Esophagus squamous epithelium (tissue), 5 donors: ENCODE measurements at regions of chr21 and their contacts with region 1.

Region 1: DNA sequence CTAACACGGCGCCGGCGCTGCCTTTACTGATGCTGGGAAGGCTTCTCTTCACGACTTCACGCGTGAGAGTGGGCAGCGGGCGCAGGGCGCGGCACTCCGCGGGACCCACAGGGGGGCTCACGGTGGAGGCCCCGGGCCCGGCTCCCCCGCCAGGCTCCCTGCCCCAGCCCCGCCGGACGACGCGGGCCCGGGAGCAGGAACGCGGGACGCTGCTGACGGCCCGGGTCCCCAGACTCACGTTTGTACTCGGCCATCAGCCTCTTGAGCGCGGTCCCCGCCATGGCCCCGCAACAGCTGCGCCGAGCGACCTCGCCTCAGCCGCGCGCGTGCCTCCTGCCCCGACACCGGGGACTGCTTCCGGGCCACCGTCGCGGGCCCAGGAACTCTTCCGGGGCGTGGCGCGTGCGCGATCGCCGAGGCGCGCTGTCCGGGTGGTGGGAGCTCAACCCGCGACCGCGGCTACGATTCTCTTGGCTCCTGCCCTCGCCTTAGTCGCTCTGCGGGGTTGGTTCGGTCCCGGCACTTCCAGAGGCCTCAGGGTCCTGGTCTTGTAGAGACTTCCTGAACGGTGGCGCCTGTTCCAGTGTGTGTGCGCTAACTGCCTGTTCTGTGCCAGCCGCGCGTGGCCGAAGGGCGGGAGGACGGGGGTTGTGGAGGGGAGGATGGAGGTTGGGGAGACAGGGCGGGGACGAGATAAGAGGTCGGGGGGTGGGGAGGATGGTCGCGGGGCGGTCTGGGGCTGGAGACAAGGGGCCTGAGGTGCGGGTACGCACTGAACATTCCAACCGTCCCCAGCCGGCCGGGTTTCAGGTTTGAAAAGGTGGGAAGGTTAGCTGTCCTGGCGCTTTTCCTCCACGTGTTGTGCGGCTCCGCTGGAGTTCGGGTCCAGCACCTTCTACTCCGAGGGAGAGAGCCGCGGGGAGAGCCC is at the start of gene UBE2G2:
- DNase-seq: no peak
- H3K4me3 ChIP-seq: peak within 1 kb of the TSS; percentile 68 to 93 (median 80)
- H3K27ac ChIP-seq: peak within 1 kb of the TSS; percentile 74 to 86 (median 80)
- H3K4me1 ChIP-seq: peaks cover 5 to 42% (median 29%) of the 10 kb centered on the region in 3 donors
- H3K27me3 ChIP-seq: no peaks in the 10 kb centered on the region
- CTCF ChIP-seq: peak in 1 of 6 experiments; percentile 45
- POLR2A ChIP-seq: peak in 3 of 4 donors; percentile 19 to 74 (median 62)
- total RNA-seq, gene UBE2G2: 27.9 to 70.0 (median 51.1) TPM

Region 2: GRCh38 chr21:44375281-44375651 is 426.5 kb before region 1 on chr21:
- intact Hi-C with region 1: no loop called
- DNase-seq: no peak
- H3K4me3 ChIP-seq: no peak overlapping the region
- H3K27ac ChIP-seq: no peak overlapping the region
- H3K4me1 ChIP-seq: peaks cover 0 to 11% (median 6%) of the 10 kb centered on the region in 3 donors
- H3K27me3 ChIP-seq: peaks cover 0 to 74% (median 0%) of the 10 kb centered on the region in 4 donors
- CTCF ChIP-seq: no peak
- POLR2A ChIP-seq: no peak

Region 3: DNA sequence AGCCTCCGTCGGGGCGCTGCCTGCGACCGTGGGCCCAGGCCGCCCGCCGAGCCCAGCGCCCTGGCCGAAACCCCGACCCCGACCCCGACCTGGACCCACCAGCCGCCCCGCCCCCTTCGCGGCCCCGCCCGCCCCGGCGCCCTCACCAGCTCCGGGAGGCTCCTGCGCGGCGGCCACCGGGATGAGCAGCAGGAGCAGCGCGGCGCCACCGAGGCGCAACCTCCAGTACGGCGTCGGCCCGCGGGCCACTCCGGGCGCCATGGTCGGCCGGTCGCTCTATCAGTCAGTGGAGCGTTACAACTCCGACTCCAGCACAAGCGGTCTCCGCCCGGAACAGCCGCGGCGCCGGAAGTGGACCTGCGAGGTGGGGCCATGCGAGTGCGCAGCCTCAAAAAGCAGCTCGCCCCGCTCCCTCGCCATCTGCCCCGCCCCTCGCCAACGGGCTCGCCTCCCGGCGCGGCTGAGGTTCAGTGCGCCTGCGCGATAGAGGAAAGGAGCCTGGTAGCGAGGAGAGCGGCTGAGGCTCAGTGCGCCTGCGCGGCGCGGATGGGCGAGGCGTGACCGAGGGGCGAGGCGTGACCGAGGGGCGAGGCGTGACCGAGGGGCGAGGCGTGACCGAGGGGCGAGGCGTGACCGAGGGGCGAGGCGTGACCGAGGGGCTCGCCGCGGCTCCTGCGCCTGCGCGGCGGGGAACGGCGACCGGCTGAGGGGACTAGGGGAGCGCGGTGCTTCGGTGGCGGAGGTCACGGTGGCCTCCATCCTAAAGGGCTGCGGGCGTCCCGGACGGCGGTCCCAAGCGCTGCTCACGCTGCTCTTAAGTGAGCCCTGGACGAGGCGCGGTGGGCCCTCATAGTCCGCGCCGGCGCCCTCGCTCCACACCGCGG is 71.9 kb after region 1 on chr21 and contains the start of gene PTTG1IP:
- intact Hi-C with region 1: loop called (anchors 5 kb)
- DNase-seq: peak; percentile 84
- H3K4me3 ChIP-seq: peak within 1 kb of the TSS; percentile 87 to 96 (median 92)
- H3K27ac ChIP-seq: peak within 1 kb of the TSS; percentile 95 to 97 (median 96)
- H3K4me1 ChIP-seq: peaks cover 32 to 76% (median 39%) of the 10 kb centered on the region in 3 donors
- H3K27me3 ChIP-seq: no peaks in the 10 kb centered on the region
- CTCF ChIP-seq: peak in 2 of 6 experiments; percentile 9 to 33
- POLR2A ChIP-seq: peak in 3 of 4 donors; percentile 42 to 83 (median 65)
- total RNA-seq, gene PTTG1IP: 83.1 to 132 (median 114) TPM